ENCODE measurements at regions of chr7 and their contacts with region 1.

Region 1: DNA sequence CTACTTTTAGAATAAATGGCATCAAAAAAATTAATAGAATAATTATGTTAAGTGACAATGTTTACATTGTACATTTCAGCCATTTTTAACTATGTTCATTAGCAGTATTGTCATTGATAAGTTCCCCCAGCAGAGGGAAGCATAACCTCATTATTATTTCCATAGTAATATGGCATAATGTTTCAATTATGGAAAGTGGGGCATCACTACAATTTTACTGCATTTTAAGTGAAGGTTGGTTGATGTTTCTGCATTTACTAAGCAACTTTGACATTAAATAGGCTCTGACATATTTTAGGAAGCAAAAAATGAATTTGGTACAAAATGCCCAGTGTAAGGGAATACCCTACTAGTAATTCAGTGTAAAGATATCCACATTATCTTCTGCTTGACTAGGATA is 218.3 kb downstream of the SEMA3A start:
- DNase-seq: no peak

Region 2: GRCh38 chr7:84188786-84189405 is 212.6 kb after region 1 on chr7:
- intact Hi-C with region 1: loop called (anchors 5 kb)
- DNase-seq: no peak